Activated naive CD8-positive, alpha-beta T cell treated with anti-CD3 and anti-CD28 coated beads, Interleukin-2, amount 10 ng/mL, durations not matched to agents 7 days and 5 days (primary cell): ENCODE measurements at regions of chr15 and their contacts with region 1.

Region 1: DNA sequence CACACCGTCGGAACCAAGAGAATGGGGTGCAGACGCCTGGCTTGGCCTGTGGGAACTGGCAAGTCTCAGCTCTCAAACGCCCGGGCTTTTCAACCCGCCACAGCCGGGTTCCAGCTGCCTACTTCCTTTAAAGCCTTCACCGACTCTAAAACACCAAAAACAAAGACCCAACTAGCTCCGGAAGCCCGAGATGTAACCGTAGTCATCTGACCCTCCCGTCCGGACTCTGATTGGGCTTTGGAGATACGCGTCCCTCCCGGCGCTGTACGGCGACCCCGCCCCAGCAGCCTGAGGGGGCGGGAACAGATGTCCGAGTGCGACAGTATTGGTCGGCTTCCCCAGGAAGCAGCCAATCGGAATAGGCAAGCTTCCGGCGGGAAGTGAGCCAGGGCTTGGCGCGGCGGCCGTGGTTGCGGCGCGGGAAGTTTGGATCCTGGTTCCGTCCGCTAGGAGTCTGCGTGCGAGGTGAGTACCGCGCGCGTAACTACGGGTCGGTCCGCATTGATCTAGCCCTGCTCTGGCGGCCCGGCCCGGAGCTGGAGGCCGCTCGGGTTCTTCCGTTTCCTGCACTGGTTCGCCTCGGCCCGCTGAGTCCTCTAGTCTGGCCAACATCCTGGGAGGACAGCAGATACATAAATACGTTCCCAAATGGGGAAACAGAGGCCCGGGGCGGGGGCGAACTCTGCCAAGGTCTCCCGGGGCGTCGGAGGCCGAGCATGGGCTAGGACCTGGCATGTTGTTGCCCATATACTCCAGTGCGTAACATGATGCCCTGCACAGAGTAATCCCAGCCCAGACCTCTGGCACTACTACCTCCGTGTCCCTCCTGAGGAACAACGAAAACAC is at the start of gene BLM:
- DNase-seq: peak; percentile 93
- ATAC-seq: peak; percentile 99
- H3K4me3 Mint-ChIP-seq: peak within 1 kb of the TSS; percentile 96
- H3K27ac Mint-ChIP-seq: peak within 1 kb of the TSS; percentile 92
- H3K4me1 Mint-ChIP-seq: peaks cover 22% of the 10 kb centered on the region
- H3K27me3 Mint-ChIP-seq: no peaks in the 10 kb centered on the region
- total RNA-seq, gene BLM: 36.6 to 41.0 TPM

Region 2: GRCh38 chr15:90697181-90697580 is 20.0 kb before region 1 on chr15:
- POLR2A ChIA-PET with region 1: interaction called, 17 read pairs
- DNase-seq: peak; percentile 41
- ATAC-seq: peak; percentile 97
- H3K4me3 Mint-ChIP-seq: peak overlapping the region; percentile 53
- H3K27ac Mint-ChIP-seq: peak overlapping the region; percentile 89
- H3K4me1 Mint-ChIP-seq: peaks cover 29% of the 10 kb centered on the region
- H3K27me3 Mint-ChIP-seq: no peaks in the 10 kb centered on the region

Region 3: GRCh38 chr15:90869601-90870353 is 152.6 kb after region 1 on chr15:
- POLR2A ChIA-PET with region 1: interaction called, 12 read pairs
- DNase-seq: no peak
- ATAC-seq: peak; percentile 37
- H3K4me3 Mint-ChIP-seq: peak overlapping the region; percentile 91
- H3K27ac Mint-ChIP-seq: peak overlapping the region; percentile 92
- H3K4me1 Mint-ChIP-seq: peaks cover 44% of the 10 kb centered on the region
- H3K27me3 Mint-ChIP-seq: no peaks in the 10 kb centered on the region